MCF 10A (cell line): ENCODE measurements at regions of chr18 and their contacts with region 1.

Region 1: GRCh38 chr18:12038639-12039417 is 54.8 kb upstream of the ANKRD62 start:
- DNase-seq: peak; percentile 70
- H3K4me3 Mint-ChIP-seq: peak overlapping the region; percentile 71
- H3K27ac Mint-ChIP-seq: no peak overlapping the region
- H3K4me1 Mint-ChIP-seq: peaks cover 16% of the 10 kb centered on the region
- H3K27me3 Mint-ChIP-seq: no peaks in the 10 kb centered on the region
- CTCF ChIP-seq: peak; percentile 98

Region 2: DNA sequence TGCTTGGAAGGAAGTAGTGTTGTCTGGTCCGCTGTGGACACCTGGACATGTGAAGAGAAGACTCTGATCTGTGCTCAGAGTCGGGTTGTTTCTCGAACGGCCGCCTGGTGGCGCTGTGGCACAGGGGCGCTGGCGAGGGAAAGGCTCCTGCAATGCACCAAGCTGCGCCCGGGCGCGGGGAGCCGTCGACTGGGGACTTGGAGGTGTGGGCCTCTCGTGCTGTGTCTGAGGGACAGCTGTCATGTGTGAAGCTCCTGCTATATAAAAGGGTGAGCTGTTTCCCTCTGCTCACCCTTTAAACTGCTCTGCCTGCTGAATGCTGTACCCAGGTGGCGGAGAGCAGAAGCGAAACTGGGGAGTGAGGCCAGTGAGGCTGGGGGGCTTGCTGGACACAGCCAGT is 305.8 kb before region 1 on chr18:
- CTCF ChIA-PET with region 1: interaction called, 22 read pairs
- POLR2A ChIA-PET with region 1: no interaction called
- intact Hi-C with region 1: loop called (anchors 1 kb)
- DNase-seq: peak; percentile 75
- H3K4me3 Mint-ChIP-seq: peak overlapping the region; percentile 17
- H3K27ac Mint-ChIP-seq: no peak overlapping the region
- H3K4me1 Mint-ChIP-seq: no peaks in the 10 kb centered on the region
- H3K27me3 Mint-ChIP-seq: peaks cover 30% of the 10 kb centered on the region
- CTCF ChIP-seq: peak; percentile 90

Region 3: DNA sequence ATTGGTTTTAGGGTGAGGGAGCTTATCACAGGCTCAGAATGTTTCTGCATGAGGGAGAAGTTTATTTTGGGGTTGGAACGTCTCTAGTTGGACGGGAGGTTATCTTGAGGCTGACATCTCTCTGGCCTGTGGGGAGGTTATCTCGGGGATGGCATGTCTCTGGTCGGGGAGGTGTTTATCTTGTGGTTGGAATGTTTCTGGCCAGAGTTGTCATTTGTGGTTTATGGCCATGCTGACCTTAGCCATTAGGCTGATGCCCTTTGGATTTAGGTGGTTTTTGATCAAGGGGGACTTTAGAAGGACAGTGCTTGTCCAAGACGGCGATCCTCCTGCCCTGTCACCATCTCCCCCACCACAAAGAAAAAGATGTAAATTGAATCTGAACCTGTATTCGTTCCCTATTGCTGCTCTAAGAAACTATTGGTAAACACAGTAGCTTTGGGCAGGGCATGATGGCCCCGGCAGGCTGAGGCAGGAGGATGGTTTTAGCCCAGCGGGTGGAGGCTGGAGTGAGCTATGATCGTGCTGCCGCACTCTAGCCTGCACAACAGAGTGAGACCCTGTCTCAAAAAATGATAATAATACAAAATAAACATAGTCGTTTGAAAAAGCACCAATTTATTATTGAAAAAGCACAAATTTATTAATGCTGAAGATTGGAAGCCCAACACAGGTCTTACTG is 112.9 kb before region 1 on chr18:
- CTCF ChIA-PET with region 1: interaction called, 15 read pairs
- POLR2A ChIA-PET with region 1: no interaction called
- intact Hi-C with region 1: no loop called
- DNase-seq: no peak
- H3K4me3 Mint-ChIP-seq: no peak overlapping the region
- H3K27ac Mint-ChIP-seq: no peak overlapping the region
- H3K4me1 Mint-ChIP-seq: no peaks in the 10 kb centered on the region
- H3K27me3 Mint-ChIP-seq: no peaks in the 10 kb centered on the region
- CTCF ChIP-seq: no peak

Region 4: GRCh38 chr18:11932393-11932792 is 106.4 kb before region 1 on chr18:
- CTCF ChIA-PET with region 1: interaction called, 87 read pairs
- POLR2A ChIA-PET with region 1: interaction called, 12 read pairs
- intact Hi-C with region 1: no loop called
- DNase-seq: no peak
- H3K4me3 Mint-ChIP-seq: no peak overlapping the region
- H3K27ac Mint-ChIP-seq: no peak overlapping the region
- H3K4me1 Mint-ChIP-seq: no peaks in the 10 kb centered on the region
- H3K27me3 Mint-ChIP-seq: no peaks in the 10 kb centered on the region
- CTCF ChIP-seq: no peak

Region 5: GRCh38 chr18:11937874-11938478 is 100.9 kb before region 1 on chr18:
- CTCF ChIA-PET with region 1: interaction called, 87 read pairs
- POLR2A ChIA-PET with region 1: interaction called, 12 read pairs
- intact Hi-C with region 1: loop called (anchors 1 kb)
- DNase-seq: peak; percentile 80
- H3K4me3 Mint-ChIP-seq: no peak overlapping the region
- H3K27ac Mint-ChIP-seq: no peak overlapping the region
- H3K4me1 Mint-ChIP-seq: peaks cover 13% of the 10 kb centered on the region
- H3K27me3 Mint-ChIP-seq: no peaks in the 10 kb centered on the region
- CTCF ChIP-seq: peak; percentile 73

Region 6: DNA sequence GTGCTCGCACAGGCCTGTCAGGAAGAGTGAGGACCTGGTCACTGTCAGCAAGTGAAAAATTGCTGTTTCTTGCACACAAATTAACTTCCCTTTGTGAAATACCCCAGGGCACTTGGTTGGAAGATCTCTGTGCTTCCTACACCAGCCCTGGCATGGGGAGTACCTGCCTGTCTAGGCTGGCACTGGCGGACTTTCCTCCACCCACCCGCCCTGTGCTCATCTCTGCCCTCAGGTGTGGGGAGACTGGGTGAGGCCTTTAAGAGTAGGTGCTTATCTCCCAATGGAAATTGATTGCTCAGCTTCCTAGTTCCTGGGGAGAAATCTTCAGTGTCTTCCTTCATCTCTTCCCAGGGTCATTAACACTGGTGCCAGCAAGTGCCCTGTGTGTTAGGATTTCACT is 15.5 kb before region 1 on chr18:
- CTCF ChIA-PET with region 1: interaction called, 28 read pairs
- POLR2A ChIA-PET with region 1: interaction called, 3 read pairs
- intact Hi-C with region 1: no loop called
- DNase-seq: peak; percentile 41
- H3K4me3 Mint-ChIP-seq: no peak overlapping the region
- H3K27ac Mint-ChIP-seq: no peak overlapping the region
- H3K4me1 Mint-ChIP-seq: peaks cover 9% of the 10 kb centered on the region
- H3K27me3 Mint-ChIP-seq: no peaks in the 10 kb centered on the region
- CTCF ChIP-seq: no peak